WTC11 (cell line): ENCODE measurements at regions of chr5 and their contacts with region 1.

Region 1: DNA sequence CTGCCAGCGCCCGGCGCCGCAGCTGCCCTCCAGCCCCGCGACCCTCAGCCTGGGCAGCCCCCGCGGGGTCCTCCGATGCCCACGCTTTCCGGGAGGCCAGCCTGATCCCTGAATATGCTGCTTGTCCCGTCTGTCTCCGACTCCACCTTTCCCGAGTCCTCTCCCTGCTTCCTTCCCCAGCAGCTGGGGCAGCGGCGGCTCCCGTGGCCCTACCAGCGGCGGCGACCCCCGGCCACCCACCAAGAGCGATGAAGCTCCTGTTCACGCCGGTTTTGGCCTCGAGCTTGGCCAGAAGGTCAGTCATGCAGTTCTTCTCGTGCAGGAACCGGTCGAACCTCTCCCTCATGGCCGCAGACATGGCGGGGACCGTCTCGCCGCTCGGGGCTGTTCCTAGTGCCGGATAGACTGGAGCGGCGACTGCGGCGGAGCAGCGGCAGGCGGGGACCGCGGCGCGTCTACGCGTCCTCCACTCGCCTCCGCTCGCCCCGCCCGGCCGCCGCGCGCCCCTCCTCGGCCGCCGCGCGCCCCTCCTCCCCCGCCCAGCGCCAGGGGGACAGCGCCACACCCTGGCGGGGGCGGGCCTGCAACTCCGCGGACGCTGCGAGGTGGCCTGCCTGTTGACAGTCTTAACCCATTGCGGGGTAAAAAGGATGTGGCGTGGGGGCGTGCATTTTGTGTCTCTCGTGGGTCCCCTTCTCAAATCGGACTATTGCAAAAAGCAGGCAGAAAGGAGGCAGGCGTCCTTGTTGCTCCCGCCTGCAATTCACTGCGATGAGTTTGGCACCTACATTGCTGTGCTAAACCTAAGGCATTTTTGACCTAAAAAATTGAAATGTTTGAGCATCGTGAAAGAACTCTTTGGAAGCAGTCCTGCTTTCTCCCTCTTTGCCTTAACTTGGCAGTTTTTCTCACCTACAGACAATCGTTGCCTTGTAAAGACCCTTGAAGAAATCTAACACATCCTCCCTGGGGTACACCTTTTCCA is at the start of gene REEP5:
- DNase-seq: peak; percentile 82
- ATAC-seq: peak; percentile 90
- H3K4me3 Mint-ChIP-seq: peak within 1 kb of the TSS; percentile 93
- H3K27ac Mint-ChIP-seq: peak within 1 kb of the TSS; percentile 95
- H3K4me1 Mint-ChIP-seq: peaks cover 20% of the 10 kb centered on the region
- H3K27me3 Mint-ChIP-seq: peaks cover 12% of the 10 kb centered on the region
- CTCF ChIP-seq: peak; percentile 76
- total RNA-seq, gene REEP5: 49.6 to 54.3 TPM (median 53.0 TPM) in 3 replicates

Region 2: GRCh38 chr5:112976432-112977309 is 54.5 kb after region 1 on chr5 and contains the start of gene DCP2:
- CTCF ChIA-PET with region 1: interaction called, 6 read pairs
- POLR2A ChIA-PET with region 1: interaction called, 15 read pairs
- DNase-seq: peak; percentile 97
- ATAC-seq: peak; percentile 96
- H3K4me3 Mint-ChIP-seq: peak within 1 kb of the TSS; percentile 98
- H3K27ac Mint-ChIP-seq: peak within 1 kb of the TSS; percentile 98
- H3K4me1 Mint-ChIP-seq: peaks cover 38% of the 10 kb centered on the region
- H3K27me3 Mint-ChIP-seq: no peaks in the 10 kb centered on the region
- CTCF ChIP-seq: no peak
- total RNA-seq, gene DCP2: 186 to 207 TPM (median 191 TPM) in 3 replicates